ENCODE measurements at regions of chr7 and their contacts with region 1.

Region 1: GRCh38 chr7:158704704-158705468 is at the start of gene NCAPG2:
- DNase-seq: peak; percentile 94 to 99 (median 98)
- ATAC-seq: peak; percentile 96 to 99 (median 97)
- H3K4me3 ChIP-seq: peak within 1 kb of the TSS; percentile 82 to 93
- H3K4me3 Mint-ChIP-seq: peak within 1 kb of the TSS; percentile 84 to 86 (median 85)
- H3K27ac ChIP-seq: peak within 1 kb of the TSS; percentile 64
- H3K27ac Mint-ChIP-seq: peak within 1 kb of the TSS; percentile 71 to 83
- H3K4me1 ChIP-seq: peaks cover 8 to 23% of the 10 kb centered on the region in 2 experiments
- H3K4me1 Mint-ChIP-seq: peaks cover 12 to 29% (median 23%) of the 10 kb centered on the region in 3 donors
- H3K27me3 ChIP-seq: peaks cover 0 to 3% of the 10 kb centered on the region in 2 experiments
- H3K27me3 Mint-ChIP-seq: no peaks in the 10 kb centered on the region
- total RNA-seq, gene NCAPG2: 6.2 to 14.7 (median 11.9) TPM

Region 2: GRCh38 chr7:158798741-158799140 is 93.9 kb after region 1 on chr7:
- CTCF ChIA-PET with region 1: no interaction called
- POLR2A ChIA-PET with region 1: interaction called in 1 of 2 experiments, 10 read pairs
- DNase-seq: no peak
- ATAC-seq: no peak
- H3K4me3 ChIP-seq: no peak overlapping the region
- H3K4me3 Mint-ChIP-seq: no peak overlapping the region
- H3K27ac ChIP-seq: no peak overlapping the region
- H3K27ac Mint-ChIP-seq: peak overlapping the region in 1 of 2 donors; percentile 24
- H3K4me1 ChIP-seq: peaks cover 7 to 37% of the 10 kb centered on the region in 2 experiments
- H3K4me1 Mint-ChIP-seq: peaks cover 49 to 56% (median 52%) of the 10 kb centered on the region in 3 donors
- H3K27me3 ChIP-seq: no peaks in the 10 kb centered on the region
- H3K27me3 Mint-ChIP-seq: no peaks in the 10 kb centered on the region

Region 3: DNA sequence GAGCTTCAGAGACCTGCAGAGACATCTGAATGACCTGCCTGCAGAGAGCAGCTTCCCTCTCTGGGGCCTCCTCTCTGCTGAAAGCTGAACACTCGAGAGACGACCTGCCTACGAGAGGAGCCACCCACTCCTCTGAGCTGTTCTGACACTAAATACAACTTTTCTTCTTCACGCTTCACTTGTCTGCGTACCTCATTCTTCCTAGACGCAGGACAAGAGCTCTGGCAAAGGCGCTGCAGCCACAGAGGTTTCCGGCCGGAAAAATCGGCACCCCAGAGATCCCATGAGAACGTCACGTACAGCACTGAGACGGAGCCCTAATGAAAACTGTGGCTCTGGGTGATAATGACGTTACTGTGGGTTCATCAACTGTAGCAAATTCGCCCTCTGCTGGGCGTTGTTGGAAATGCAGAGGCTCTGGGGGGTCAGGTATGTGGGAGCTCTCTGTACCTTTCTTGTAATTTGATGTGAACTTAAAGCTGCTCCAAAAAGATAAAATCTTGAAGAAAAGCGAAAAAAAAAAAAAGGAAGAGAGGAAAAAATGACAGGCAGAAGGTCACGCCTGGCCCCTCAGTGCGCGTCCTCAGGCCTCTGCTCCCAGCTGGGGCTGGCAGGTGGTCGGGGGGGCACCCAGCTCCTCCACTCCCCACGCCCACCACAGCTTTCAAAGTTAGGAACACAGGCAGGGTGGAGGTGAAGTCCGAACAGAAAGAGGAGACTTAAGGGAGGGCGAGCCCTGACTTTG is 272.1 kb after region 1 on chr7:
- CTCF ChIA-PET with region 1: interaction called, 4 to 30 read pairs
- POLR2A ChIA-PET with region 1: no interaction called
- DNase-seq: peak; percentile 63 to 94 (median 86)
- ATAC-seq: peak; percentile 80 to 85 (median 80)
- H3K4me3 ChIP-seq: peak overlapping the region; percentile 47 to 77
- H3K4me3 Mint-ChIP-seq: peak overlapping the region; percentile 81 to 85 (median 85)
- H3K27ac ChIP-seq: peak overlapping the region; percentile 50
- H3K27ac Mint-ChIP-seq: peak overlapping the region; percentile 86 to 88
- H3K4me1 ChIP-seq: peaks cover 6 to 31% of the 10 kb centered on the region in 2 experiments
- H3K4me1 Mint-ChIP-seq: peaks cover 12 to 21% (median 21%) of the 10 kb centered on the region in 3 donors
- H3K27me3 ChIP-seq: peaks cover 0 to 7% of the 10 kb centered on the region in 2 experiments
- H3K27me3 Mint-ChIP-seq: no peaks in the 10 kb centered on the region